Left cardiac atrium (tissue), 4 donors: ENCODE measurements at regions of chr13 and their contacts with region 1.

Region 1: GRCh38 chr13:26872525-26873385 is 112.2 kb upstream of the GPR12 start:
- DNase-seq: peak; percentile 56
- ATAC-seq: peak; percentile 37 to 44

Region 2: DNA sequence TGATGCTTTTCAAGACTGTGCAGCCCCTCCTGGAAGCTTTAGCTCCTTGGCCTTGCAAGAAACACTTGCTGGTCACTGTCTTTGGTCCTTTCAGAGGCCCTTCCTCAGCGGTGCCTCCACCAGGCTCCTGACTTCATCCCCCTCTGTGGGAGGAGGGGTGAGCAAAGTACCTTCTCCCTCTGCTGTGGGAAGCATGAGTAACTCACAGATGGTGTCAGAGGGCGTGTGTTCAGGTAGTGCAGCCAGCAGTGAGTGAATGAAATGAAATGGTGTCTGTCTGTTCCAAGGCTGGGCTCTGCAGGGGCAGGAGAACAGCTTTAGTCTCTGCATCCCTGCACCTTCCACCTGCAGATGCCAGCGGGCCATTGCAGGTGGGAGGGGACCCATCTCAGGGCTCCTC is 923.8 kb before region 1 on chr13:
- intact Hi-C with region 1: no loop called
- DNase-seq: no peak
- ATAC-seq: no peak

Region 3: DNA sequence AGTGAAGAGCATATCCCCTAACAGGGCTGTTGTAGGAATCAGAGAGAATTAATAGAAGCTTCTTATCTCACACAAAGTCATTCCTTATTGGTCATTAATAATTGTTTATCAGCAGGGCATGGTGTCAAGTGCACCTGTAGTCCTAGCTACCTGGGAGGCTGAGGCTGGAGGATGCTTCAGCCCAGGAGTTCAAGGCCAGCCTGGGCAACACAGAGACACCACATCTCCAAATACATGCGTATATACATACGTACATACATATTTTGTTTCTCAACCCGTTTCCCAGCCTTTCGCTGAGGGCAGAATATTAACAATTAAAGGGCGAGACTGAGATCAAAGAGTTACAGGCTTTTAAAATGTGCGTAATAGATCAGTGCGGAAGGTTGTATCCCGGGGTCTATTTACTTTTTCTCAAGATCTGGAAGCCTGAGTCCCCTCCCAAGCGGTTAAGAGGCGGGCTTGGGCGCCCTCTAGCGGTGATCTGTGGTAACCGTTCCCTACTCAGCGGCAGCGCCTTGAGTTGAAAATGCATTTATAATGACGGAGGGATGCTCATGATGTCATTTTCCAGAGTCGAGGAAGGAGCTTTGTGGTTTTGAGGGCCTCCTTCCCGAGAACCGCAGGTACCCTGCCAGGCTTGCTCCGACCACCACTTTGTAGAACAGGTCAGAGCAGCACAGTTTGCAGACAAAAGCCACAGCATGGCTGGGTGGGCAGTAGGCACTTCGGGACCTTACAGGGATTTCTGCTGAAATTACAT is 57.4 kb after region 1 on chr13:
- intact Hi-C with region 1: loop called in 1 of 2 experiments (anchors 5 kb)
- DNase-seq: peak; percentile 68
- ATAC-seq: peak; percentile 78 to 82